ENCODE measurements at regions of chr13 and their contacts with region 1.

Region 1: DNA sequence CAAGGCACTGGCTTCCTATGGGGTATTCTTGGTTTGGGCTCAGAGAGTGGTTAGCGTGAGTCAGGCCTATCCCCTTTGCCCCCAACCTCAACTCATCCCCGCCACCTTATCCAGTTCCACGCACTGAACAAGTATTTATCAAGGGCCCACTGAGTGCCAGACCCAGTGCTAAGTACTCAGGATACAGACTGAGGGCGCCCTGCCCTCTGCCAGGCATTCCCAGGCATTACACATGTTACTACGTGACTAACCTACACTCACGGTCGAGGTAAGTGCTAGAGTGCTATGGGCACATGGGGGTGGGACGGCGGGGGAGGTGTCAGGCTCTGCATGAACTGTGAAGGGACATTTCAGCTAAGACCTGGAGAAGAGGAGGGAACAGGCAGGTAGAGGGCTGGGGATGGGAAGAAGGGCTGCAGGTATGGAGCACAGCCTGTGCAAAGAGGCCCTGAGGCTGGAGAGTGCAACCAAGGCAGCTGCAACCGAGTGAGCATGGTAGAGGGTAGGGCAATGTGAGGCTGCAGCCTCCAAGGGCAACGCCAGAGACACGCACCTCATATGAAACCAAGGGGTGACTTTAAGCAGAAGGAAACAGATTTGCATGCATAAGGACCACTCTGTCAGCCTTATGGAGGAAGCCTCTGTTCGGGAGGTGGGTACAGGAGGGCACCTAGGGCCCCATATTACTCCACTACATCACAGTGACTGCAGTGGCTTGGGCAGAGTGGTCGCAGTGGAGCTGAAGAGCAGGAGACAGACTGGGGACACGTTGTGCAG is 22.5 kb downstream of the DHRS12 start:
- DNase-seq: peak; percentile 63
- H3K4me3 ChIP-seq: no peak overlapping the region
- H3K27ac ChIP-seq: no peak overlapping the region; a peak in 1 of 4 replicates
- H3K4me1 ChIP-seq: peaks cover 10 to 41% of the 10 kb centered on the region in 2 experiments
- H3K27me3 ChIP-seq: no peaks in the 10 kb centered on the region
- CTCF ChIP-seq: peak; percentile 49
- EP300 ChIP-seq: no peak
- RAD21 ChIP-seq: peak; percentile 61

Region 2: DNA sequence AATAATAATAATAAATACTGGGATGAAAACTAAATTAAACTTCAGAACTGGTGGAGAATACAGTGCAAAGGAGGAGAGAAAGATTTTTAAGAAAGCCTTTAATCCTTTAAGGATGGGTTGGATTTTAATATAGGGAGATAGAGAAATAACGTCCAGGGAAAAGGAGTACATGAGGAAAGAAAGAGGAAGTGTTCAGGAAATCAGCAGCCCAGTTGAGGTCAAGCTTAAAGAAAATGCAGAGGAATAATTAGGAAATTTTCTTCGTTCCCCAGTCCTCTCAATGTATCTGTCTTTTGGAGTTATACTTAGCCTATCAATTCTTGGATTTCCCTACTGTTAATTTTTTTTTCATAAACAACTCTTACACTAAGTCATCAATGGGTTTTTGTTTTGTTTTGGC is 376.3 kb before region 1 on chr13:
- CTCF ChIA-PET with region 1: no interaction called
- POLR2A ChIA-PET with region 1: no interaction called
- DNase-seq: no peak
- H3K4me3 ChIP-seq: no peak overlapping the region
- H3K27ac ChIP-seq: no peak overlapping the region
- H3K4me1 ChIP-seq: no peaks in the 10 kb centered on the region
- H3K27me3 ChIP-seq: no peaks in the 10 kb centered on the region
- CTCF ChIP-seq: no peak
- EP300 ChIP-seq: no peak
- RAD21 ChIP-seq: no peak

Region 3: DNA sequence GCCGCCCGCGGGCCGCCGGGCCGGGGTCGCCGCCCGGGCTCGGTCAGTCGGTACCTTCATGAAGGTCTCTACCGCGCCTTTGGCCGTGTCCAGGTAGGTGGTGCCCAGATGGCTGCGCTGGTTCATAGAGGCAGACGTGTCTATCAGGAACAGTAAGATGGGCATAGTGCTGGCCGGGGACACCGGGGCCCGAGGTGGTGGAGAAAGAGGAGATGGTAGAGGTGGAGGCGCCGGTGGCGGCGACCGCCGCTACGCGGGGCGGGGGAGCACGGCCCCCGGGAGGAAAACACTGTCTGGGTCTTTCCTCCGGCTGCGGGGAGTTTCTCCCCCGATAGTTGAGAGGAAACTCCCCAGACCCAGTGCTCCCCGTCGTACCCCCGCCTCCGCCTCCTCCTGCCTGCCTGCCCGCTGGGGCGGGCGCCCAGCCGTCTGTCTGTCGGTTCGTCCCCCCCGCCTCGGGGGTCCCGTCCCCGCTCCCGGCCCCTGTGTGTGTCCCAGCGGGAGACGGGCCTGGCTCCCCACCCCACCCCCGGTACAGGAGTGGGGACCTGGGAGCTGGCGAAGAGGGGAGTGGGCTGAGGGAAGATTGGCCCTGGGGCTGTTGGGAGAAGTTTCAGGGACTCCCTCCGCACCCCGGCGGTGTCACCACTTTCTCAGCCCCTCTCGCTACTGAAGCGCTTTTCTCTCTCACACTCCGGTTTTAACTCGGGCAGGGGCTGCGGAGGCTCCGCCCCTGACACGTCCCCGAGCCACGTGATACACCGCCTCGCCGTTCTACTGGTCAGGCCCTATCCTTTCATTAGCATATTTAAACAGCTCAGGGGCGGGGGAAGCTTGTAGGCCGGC is 328.9 kb before region 1 on chr13 and contains the start of gene INTS6:
- CTCF ChIA-PET with region 1: no interaction called
- POLR2A ChIA-PET with region 1: interaction called, 32 read pairs
- DNase-seq: no peak
- H3K4me3 ChIP-seq: peak within 1 kb of the TSS; percentile 79 to 90
- H3K27ac ChIP-seq: peak within 1 kb of the TSS; percentile 90 to 97
- H3K4me1 ChIP-seq: peaks cover 5 to 7% of the 10 kb centered on the region in 2 experiments; a peak in 3 of 4 replicates
- H3K27me3 ChIP-seq: no peaks in the 10 kb centered on the region
- CTCF ChIP-seq: no peak
- EP300 ChIP-seq: peak in 1 of 2 experiments; percentile 7; a peak in 1 of 4 replicates
- RAD21 ChIP-seq: peak; percentile 27; the same call in 1 of the 2 replicates
- polyA plus RNA-seq, gene INTS6: 7.7 and 9.1 TPM in 2 replicates

Region 4: GRCh38 chr13:51583875-51584730 is 197.3 kb before region 1 on chr13 and contains the start of gene WDFY2:
- CTCF ChIA-PET with region 1: interaction called, 5 read pairs
- POLR2A ChIA-PET with region 1: interaction called, 27 read pairs
- DNase-seq: peak; percentile 96
- H3K4me3 ChIP-seq: peak within 1 kb of the TSS; percentile 83 to 98
- H3K27ac ChIP-seq: peak within 1 kb of the TSS; percentile 89 to 97
- H3K4me1 ChIP-seq: peaks cover 10 to 18% of the 10 kb centered on the region in 2 experiments; a peak in 3 of 4 replicates
- H3K27me3 ChIP-seq: no peaks in the 10 kb centered on the region
- CTCF ChIP-seq: no peak
- EP300 ChIP-seq: peak in 1 of 2 experiments; percentile 50; a peak in 1 of 4 replicates
- RAD21 ChIP-seq: no peak; the same call in 1 of the 2 replicates
- polyA plus RNA-seq, gene WDFY2: 4.1 and 5.4 TPM in 2 replicates

Region 5: GRCh38 chr13:51614350-51614786 is 167.1 kb before region 1 on chr13:
- CTCF ChIA-PET with region 1: interaction called, 4 read pairs
- POLR2A ChIA-PET with region 1: interaction called, 18 read pairs
- DNase-seq: peak; percentile 64
- H3K4me3 ChIP-seq: no peak overlapping the region; a peak in 1 of 4 replicates
- H3K27ac ChIP-seq: peak overlapping the region; percentile 29 to 96; a peak in 3 of 4 replicates
- H3K4me1 ChIP-seq: peaks cover 29 to 40% of the 10 kb centered on the region in 2 experiments
- H3K27me3 ChIP-seq: no peaks in the 10 kb centered on the region
- CTCF ChIP-seq: no peak
- EP300 ChIP-seq: peak in 1 of 2 experiments; percentile 72; a peak in 1 of 4 replicates
- RAD21 ChIP-seq: no peak

Region 6: DNA sequence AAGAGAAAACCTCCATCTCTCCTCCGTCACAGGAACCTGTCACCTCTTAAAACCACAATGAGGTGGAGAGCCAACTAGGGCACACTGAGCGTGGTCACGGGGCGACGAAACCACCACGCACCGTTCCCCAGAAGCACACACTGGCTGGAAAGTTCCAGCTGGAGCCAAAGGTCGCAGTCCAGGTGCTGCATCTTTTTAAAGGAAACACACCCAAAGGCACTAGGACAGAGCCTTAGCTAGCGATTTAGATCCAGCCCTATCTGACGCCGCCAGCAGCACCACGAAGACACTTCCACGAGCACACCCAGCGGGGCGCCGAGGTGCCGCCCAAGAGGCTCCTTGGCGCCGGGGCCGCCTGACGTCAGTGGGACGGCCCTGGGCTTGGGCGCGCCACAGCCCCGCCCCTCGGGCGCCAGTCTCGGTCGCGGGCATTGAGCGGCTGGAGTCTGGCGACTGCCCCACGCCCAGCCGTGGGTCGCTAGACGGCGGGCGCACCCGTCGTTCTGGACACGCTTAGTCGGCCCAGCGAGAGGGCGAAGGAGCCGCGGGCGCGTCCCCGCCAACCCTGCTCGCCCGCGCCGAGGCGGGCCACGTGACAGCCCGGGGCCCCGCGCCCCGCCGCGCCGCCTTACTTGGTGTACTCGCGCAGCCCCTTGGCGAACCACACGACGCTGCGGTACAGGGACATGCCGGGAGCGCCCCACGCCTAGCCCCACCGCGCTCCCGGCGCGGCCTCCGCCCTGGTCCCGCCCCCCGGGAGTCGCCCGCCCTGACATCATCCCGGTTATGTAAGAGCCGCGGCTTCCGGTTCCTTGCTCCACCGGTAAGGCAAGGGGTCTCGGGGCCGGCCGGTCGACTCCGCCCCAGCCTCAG is 22.2 kb after region 1 on chr13 and contains the start of gene DHRS12:
- CTCF ChIA-PET with region 1: interaction called, 80 read pairs
- POLR2A ChIA-PET with region 1: interaction called, 13 read pairs
- DNase-seq: peak; percentile 94
- H3K4me3 ChIP-seq: peak within 1 kb of the TSS; percentile 82 to 90
- H3K27ac ChIP-seq: peak within 1 kb of the TSS; percentile 78 to 98
- H3K4me1 ChIP-seq: peaks cover 19 to 45% of the 10 kb centered on the region in 2 experiments
- H3K27me3 ChIP-seq: no peaks in the 10 kb centered on the region
- CTCF ChIP-seq: no peak
- EP300 ChIP-seq: no peak
- RAD21 ChIP-seq: 0 out of 2 replicates have a peak, but pooled peaks have one; percentile 2
- polyA plus RNA-seq, gene DHRS12: 8.2 and 9.6 TPM in 2 replicates